IMR-90 (cell line): ENCODE measurements at regions of chr5 and their contacts with region 1.

Region 1: GRCh38 chr5:119483155-119483554 is 30.9 kb downstream of the HSD17B4 start:
- DNase-seq: no peak
- ATAC-seq: no peak
- H3K4me3 ChIP-seq: no peak overlapping the region
- H3K27ac ChIP-seq: no peak overlapping the region
- H3K4me1 ChIP-seq: no peaks in the 10 kb centered on the region
- H3K27me3 ChIP-seq: no peaks in the 10 kb centered on the region
- CTCF ChIP-seq: no peak
- POLR2A ChIP-seq: no peak
- RAD21 ChIP-seq: no peak

Region 2: GRCh38 chr5:119340597-119341218 is 142.4 kb before region 1 on chr5:
- CTCF ChIA-PET with region 1: no interaction called
- POLR2A ChIA-PET with region 1: no interaction called
- dilution Hi-C with region 1: no loop called
- in situ Hi-C with region 1: no loop called
- intact Hi-C with region 1: no loop called
- DNase-seq: no peak
- ATAC-seq: no peak
- H3K4me3 ChIP-seq: no peak overlapping the region
- H3K27ac ChIP-seq: no peak overlapping the region
- H3K4me1 ChIP-seq: peaks cover 7% of the 10 kb centered on the region
- H3K27me3 ChIP-seq: no peaks in the 10 kb centered on the region
- CTCF ChIP-seq: no peak
- POLR2A ChIP-seq: no peak
- RAD21 ChIP-seq: no peak

Region 3: DNA sequence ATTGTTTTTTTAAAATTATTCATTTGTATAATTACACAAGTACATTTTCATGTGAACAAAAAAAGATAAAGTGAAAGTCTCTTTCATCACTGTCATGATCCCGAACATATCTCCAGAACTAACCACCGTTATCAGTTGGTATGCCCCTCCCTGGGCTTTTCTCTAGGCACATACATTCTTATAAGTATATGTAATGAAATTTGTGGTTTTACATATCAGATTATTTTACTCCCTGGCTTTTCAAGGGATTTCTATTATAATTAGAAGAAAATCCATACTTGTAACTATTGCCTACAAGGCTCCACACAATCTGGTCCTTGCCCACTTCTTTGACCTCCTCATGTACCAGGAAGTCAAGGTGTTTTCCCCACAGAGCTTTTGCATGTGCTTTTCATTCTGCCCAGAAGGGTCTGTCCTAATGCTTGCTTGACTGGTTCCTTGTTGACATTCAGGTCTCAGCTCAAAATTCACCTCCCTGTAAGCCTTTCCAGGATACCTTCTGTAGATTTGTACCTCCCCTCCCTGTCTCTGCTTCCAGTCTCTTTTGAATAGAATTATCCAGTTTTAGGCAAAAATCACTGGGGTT is 64.5 kb before region 1 on chr5:
- CTCF ChIA-PET with region 1: no interaction called
- POLR2A ChIA-PET with region 1: no interaction called
- dilution Hi-C with region 1: no loop called
- in situ Hi-C with region 1: no loop called
- intact Hi-C with region 1: no loop called
- DNase-seq: no peak
- ATAC-seq: peak; percentile 56
- H3K4me3 ChIP-seq: no peak overlapping the region
- H3K27ac ChIP-seq: no peak overlapping the region
- H3K4me1 ChIP-seq: no peaks in the 10 kb centered on the region
- H3K27me3 ChIP-seq: no peaks in the 10 kb centered on the region; the same call in 1 of the 2 replicates
- CTCF ChIP-seq: no peak
- POLR2A ChIP-seq: no peak
- RAD21 ChIP-seq: no peak

Region 4: DNA sequence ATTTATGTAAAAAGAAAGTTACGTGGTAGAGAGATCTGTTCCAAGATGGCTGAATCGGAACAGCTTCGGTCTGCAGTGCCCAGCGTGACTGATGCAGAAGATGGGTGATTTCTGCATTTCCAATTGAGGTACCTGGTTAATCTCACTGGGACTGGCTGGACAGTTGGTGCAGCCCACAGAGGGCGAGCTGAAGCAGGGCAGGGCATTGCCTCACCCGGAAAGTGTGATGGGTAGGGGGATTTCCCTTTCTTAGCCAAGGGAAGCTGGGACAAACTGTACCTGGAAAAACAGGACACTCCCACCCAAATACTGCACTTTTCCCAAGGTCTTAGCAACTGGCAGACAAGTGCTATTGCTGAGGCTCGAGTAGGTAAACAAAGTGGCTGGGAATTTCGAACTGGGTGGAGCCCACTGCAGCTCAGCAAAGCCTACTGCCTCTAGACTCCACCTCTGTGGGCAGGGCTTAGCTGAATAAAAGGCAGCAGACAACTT is 44.0 kb before region 1 on chr5:
- CTCF ChIA-PET with region 1: no interaction called
- POLR2A ChIA-PET with region 1: no interaction called
- dilution Hi-C with region 1: no loop called
- in situ Hi-C with region 1: no loop called
- intact Hi-C with region 1: no loop called
- DNase-seq: no peak
- ATAC-seq: no peak
- H3K4me3 ChIP-seq: no peak overlapping the region
- H3K27ac ChIP-seq: no peak overlapping the region
- H3K4me1 ChIP-seq: no peaks in the 10 kb centered on the region
- H3K27me3 ChIP-seq: peaks cover 5% of the 10 kb centered on the region; the same call in 1 of the 2 replicates
- CTCF ChIP-seq: no peak
- POLR2A ChIP-seq: no peak
- RAD21 ChIP-seq: no peak

Region 5: DNA sequence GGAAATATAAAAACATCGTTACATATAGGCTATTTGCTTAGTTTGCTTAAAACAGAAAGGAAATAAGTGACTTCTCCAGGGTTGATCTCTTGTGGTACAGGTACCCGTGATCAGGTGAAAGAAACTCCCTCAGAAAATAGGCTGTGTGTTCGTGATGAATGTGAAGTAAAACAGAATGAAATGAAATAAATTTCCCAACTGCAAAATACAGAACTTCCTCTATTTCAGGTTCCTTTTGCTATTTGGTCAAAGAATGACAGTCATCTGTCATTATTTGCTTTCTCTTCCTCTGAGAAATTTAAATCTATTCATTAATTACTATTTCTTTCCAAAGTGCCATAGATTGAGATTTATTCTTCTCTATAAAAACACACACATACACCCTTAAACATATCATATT is 554.3 kb after region 1 on chr5:
- CTCF ChIA-PET with region 1: no interaction called
- POLR2A ChIA-PET with region 1: no interaction called
- dilution Hi-C with region 1: no loop called
- in situ Hi-C with region 1: no loop called
- intact Hi-C with region 1: loop called (anchors 10 kb)
- DNase-seq: no peak
- ATAC-seq: no peak
- H3K4me3 ChIP-seq: no peak overlapping the region
- H3K27ac ChIP-seq: no peak overlapping the region
- H3K4me1 ChIP-seq: no peaks in the 10 kb centered on the region
- H3K27me3 ChIP-seq: no peaks in the 10 kb centered on the region
- CTCF ChIP-seq: no peak
- POLR2A ChIP-seq: no peak
- RAD21 ChIP-seq: no peak